ENCODE measurements at regions of chr11 and their contacts with region 1.

Region 1: GRCh38 chr11:64723117-64723906 is at the start of gene NRXN2:
- DNase-seq: peak; percentile 92
- ATAC-seq: peak; percentile 97
- total RNA-seq, gene NRXN2: 1.9 TPM

Region 2: GRCh38 chr11:64448599-64449556 is 274.4 kb before region 1 on chr11:
- intact Hi-C with region 1: loop called (anchors 10 kb)
- DNase-seq: peak; percentile 93
- ATAC-seq: peak; percentile 94

Region 3: DNA sequence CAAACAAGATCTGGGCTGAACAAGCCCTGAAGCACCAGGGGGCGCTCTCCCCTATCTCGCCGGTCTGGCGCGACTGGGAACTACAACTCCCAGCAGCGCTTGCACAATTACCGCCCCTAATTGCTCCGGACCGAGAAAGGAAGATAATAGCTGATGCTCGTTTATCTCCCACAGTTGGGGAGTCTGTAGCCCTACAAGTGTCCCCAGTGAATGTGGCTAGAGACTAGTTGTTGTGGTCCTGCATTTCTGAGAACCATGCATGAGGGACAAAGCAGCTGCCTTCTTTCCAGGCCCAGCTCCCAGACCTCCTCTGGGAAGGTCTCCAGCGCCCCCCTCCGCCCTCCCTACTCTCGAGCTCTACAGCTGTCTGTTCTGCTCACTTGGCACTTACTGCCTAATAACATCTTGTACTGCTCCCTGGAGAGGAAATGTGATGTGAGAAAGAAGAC is 34.8 kb before region 1 on chr11:
- intact Hi-C with region 1: loop called (anchors 1 kb)
- DNase-seq: peak; percentile 94
- ATAC-seq: peak; percentile 94

Region 4: DNA sequence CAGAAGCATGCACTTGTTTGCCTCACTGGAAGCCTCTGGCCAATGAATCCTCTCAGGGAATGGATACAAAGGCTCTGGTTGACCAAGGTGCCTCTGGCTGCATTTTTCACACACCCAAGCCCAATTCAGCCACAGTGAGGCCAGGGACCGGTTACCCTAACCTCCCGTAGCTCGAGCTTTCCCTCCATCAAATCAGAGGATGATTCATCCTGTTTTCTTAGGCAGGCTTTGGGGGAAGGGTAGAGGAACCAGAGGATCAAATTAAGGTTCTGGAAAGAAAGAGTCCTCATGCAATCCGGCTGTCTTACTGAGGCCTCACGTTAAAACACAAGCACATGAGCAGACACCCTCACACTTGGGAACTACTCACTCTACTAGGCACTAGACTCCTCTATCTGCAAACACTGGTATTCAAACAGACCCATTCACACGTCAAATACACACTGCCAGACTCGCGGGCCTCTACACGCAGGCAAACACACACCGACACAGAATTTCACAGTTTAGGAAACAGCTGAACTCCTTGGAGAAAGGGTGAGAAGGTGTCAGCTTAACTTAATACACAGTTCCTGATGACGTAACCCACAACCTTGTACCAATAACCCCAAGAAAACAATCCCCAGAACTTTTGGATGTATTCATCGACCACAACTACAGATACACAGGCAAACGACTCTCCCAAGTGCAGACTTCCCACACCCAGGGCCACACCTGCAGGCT is 12.7 kb before region 1 on chr11:
- intact Hi-C with region 1: no loop called
- DNase-seq: no peak
- ATAC-seq: no peak

Measured in Right ventricle myocardium inferior (tissue), 1 donor.